Activated CD4-positive, alpha-beta memory T cell treated with anti-CD3 and anti-CD28 coated beads, Interleukin-2, amount 10 ng/mL, durations not matched to agents 7 days and 5 days (primary cell): ENCODE measurements at regions of chr2 and their contacts with region 1.

Region 1: DNA sequence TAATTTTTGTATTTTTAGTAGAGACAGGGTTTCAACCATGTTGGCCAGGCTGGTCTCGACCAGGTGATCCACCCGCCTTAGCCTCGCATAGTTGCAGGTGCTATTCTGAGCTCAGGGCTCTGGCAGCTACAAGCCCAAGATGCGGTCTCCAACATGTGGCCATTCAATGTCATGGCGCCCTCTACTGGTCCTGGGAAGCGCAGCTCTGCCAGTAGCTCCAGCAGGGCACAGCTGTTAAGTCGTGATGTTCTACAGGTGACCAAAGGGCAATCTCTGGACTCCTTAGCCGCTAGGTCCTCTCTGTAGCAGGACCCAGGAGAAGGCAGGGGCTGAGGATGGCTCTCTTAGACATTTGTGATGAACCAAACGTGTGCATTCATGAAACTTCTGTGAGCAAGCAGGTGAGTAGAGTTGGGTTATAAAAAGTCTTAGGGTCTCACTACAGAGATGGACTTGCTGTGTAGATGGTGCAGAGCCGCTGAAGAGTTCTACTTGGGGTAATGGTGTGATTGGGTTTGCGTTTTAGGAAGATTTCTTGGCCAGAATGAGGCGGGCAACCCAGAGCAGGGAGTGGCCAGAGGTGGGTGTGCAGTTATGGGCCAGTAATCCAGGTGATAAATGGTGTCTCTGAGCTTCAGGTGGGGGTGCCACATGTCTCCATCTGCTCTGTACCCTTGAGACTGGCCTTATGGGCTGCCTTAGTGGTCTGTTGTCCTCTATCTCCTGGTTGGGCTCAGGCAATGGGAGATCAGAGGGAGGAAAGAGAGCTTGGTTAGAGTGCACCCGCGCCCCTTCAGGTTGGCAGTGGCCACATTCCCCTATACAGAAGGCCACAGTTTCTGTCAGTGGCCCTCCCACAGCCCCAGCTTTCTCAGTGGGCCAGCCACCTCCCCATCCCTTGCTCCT is 31.0 kb downstream of the IL37 start:
- DNase-seq: peak; percentile 84
- H3K4me3 Mint-ChIP-seq: no peak overlapping the region
- H3K27ac Mint-ChIP-seq: no peak overlapping the region
- H3K4me1 Mint-ChIP-seq: peaks cover 7% of the 10 kb centered on the region
- H3K27me3 Mint-ChIP-seq: peaks cover 10% of the 10 kb centered on the region

Region 2: DNA sequence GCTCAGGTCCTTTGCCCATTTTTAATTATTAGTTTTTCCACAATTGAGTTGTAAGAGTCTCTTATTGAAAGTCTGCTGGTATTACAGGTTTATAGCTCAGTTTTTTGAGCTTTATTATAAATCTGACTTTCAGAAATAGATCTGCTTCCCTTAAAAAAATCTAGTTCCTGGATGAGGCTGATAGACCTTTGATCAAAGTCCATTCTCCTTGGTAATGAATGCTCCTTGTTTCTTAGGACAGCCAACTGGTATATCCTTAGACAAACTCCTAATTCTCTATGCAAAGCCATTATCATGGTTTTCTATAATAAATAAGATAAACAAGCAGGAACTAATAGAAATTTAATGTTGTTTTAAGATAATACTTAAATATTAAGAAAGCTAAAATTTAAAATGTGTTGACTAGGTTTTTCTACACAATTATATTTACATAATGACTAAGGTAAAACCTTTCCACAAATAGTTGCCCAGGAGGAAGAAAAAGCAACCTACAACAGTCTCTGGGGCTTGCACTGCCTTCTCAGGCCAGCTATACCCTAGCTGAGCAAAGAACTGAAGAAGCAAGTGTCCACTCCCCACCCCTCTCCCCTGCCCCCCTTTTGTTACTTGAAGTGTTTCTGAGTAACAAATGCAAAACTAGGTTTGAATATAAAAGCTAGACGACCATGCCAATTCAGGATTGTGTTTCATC is 204.3 kb before region 1 on chr2:
- CTCF ChIA-PET with region 1: interaction called, 40 read pairs
- POLR2A ChIA-PET with region 1: no interaction called
- DNase-seq: no peak
- H3K4me3 Mint-ChIP-seq: no peak overlapping the region
- H3K27ac Mint-ChIP-seq: no peak overlapping the region
- H3K4me1 Mint-ChIP-seq: no peaks in the 10 kb centered on the region
- H3K27me3 Mint-ChIP-seq: no peaks in the 10 kb centered on the region

Region 3: DNA sequence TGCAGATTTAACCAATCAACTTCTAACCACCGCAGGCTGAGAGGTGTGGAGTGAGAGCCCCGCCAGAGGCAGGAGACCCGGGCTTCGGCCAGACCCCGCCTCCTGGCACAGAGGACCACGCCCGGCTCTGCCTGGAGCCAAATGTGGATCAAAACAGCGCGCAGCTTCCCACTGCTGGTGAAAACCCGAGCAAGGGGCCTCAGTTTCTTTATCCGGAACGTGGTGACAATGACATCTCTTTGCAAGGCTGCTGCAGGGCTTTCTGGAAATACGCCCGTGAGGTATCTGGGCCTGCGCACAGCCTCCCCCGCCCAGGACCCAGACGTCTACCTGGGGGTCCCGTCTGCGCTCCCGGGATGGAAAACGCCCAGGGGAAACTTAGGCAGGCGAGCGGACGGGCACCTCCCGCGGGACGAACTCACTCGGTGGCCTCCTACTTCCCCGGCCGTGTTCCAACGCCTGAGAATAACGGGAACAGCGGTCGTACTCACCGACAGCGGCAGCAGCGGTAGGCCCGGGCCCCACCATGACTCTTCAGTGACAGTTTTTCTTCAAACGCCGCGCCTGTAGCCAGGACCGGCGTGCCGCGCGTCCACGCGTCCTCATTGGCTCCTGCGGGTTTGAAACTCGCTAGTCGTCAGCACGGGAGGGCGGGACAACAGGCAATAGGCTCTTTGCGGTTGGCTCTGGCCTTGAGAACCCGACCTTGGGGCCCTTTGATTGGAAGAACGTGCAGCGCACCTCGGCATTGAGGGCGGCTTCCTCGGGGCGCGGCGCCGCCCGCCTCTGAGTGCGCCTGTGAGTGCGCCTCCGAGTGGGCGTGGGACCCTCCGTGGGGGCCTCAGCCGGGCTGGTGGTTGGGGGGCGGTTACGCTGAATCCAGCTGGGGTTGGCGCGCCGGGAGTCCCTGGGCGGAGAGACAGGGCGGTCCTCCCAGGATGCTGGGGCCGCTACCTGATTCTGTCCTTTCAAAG is 177.6 kb before region 1 on chr2 and contains the start of gene CKAP2L:
- CTCF ChIA-PET with region 1: interaction called, 13 read pairs
- POLR2A ChIA-PET with region 1: interaction called, 5 read pairs
- DNase-seq: peak; percentile 99
- H3K4me3 Mint-ChIP-seq: peak within 1 kb of the TSS; percentile 89
- H3K27ac Mint-ChIP-seq: peak within 1 kb of the TSS; percentile 98
- H3K4me1 Mint-ChIP-seq: peaks cover 68% of the 10 kb centered on the region
- H3K27me3 Mint-ChIP-seq: no peaks in the 10 kb centered on the region
- total RNA-seq, gene CKAP2L: 63.3 to 66.3 TPM

Region 4: DNA sequence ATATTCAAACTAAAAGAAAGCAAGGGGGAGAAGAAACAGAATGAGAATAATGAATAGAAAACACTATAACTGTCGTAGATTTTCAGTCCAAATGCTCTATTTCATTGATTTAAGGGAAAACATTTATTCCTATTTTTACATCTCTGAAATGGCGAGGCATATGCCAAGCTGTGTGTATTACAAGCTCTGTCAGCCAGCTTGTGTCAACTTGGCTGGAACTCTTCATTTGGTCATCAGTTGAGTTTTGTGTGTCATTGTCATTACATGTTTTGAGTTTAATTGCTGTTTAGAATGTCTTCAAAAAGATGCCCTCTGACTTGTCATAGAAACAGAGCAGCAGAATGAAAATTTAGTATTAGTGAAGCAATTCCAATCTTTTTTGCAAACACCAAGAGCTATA is 39.2 kb before region 1 on chr2:
- CTCF ChIA-PET with region 1: interaction called, 12 read pairs
- POLR2A ChIA-PET with region 1: no interaction called
- DNase-seq: no peak
- H3K4me3 Mint-ChIP-seq: no peak overlapping the region
- H3K27ac Mint-ChIP-seq: no peak overlapping the region
- H3K4me1 Mint-ChIP-seq: peaks cover 3% of the 10 kb centered on the region
- H3K27me3 Mint-ChIP-seq: peaks cover 9% of the 10 kb centered on the region

Region 5: GRCh38 chr2:112924821-112925220 is 17.2 kb before region 1 on chr2:
- CTCF ChIA-PET with region 1: interaction called, 19 read pairs
- POLR2A ChIA-PET with region 1: interaction called, 3 read pairs
- DNase-seq: no peak
- H3K4me3 Mint-ChIP-seq: no peak overlapping the region
- H3K27ac Mint-ChIP-seq: no peak overlapping the region
- H3K4me1 Mint-ChIP-seq: peaks cover 19% of the 10 kb centered on the region
- H3K27me3 Mint-ChIP-seq: peaks cover 2% of the 10 kb centered on the region